Left ventricle myocardium inferior (tissue), 1 donor: ENCODE measurements at regions of chr5 and their contacts with region 1.

Region 1: DNA sequence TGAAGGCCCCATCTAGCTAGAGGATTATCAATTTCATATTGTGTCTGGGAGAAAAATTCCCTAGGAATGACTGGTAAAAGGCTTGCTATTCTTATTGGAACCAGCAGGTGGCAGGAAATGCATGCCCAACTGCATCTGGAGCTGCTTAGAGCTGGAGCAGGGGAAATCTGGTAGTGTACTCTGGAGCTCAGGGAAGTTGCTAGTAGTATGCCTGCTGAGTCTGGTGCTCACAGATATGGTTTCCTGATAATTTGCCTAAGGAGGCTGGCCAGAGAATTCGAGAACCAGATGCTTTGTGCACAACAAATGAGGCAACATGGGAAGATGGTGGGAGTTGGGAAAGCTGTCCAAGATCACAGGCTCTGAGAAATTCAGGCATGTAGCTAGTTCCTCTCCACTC is 53.7 kb downstream of the G3BP1 start:
- DNase-seq: peak; percentile 22
- H3K4me3 ChIP-seq: no peak overlapping the region
- H3K27ac ChIP-seq: no peak overlapping the region
- H3K4me1 ChIP-seq: peaks cover 35% of the 10 kb centered on the region
- H3K27me3 ChIP-seq: no peaks in the 10 kb centered on the region
- CTCF ChIP-seq: peak; percentile 90

Region 2: GRCh38 chr5:151779636-151780035 is 45.8 kb before region 1 on chr5:
- intact Hi-C with region 1: no loop called
- DNase-seq: no peak
- H3K4me3 ChIP-seq: no peak overlapping the region
- H3K27ac ChIP-seq: no peak overlapping the region
- H3K4me1 ChIP-seq: peaks cover 97% of the 10 kb centered on the region
- H3K27me3 ChIP-seq: no peaks in the 10 kb centered on the region
- CTCF ChIP-seq: no peak

Region 3: GRCh38 chr5:152142840-152143469 is 317.5 kb after region 1 on chr5:
- intact Hi-C with region 1: loop called (anchors 5 kb)
- DNase-seq: peak; percentile 45
- H3K4me3 ChIP-seq: no peak overlapping the region
- H3K27ac ChIP-seq: no peak overlapping the region
- H3K4me1 ChIP-seq: no peaks in the 10 kb centered on the region
- H3K27me3 ChIP-seq: no peaks in the 10 kb centered on the region
- CTCF ChIP-seq: peak; percentile 92

Region 4: GRCh38 chr5:152259702-152260101 is 434.3 kb after region 1 on chr5:
- intact Hi-C with region 1: loop called (anchors 10 kb)
- DNase-seq: peak; percentile 26
- H3K4me3 ChIP-seq: no peak overlapping the region
- H3K27ac ChIP-seq: no peak overlapping the region
- H3K4me1 ChIP-seq: peaks cover 23% of the 10 kb centered on the region
- H3K27me3 ChIP-seq: no peaks in the 10 kb centered on the region
- CTCF ChIP-seq: no peak

Region 5: GRCh38 chr5:152505442-152506042 is 680.1 kb after region 1 on chr5:
- intact Hi-C with region 1: loop called (anchors 5 kb)
- DNase-seq: peak; percentile 30
- H3K4me3 ChIP-seq: no peak overlapping the region
- H3K27ac ChIP-seq: no peak overlapping the region
- H3K4me1 ChIP-seq: no peaks in the 10 kb centered on the region
- H3K27me3 ChIP-seq: no peaks in the 10 kb centered on the region
- CTCF ChIP-seq: peak; percentile 70